ENCODE measurements at regions of chr13 and their contacts with region 1.

Region 1: GRCh38 chr13:97810152-97810551 is 143.3 kb upstream of the IPO5 start:
- DNase-seq: no peak
- ATAC-seq: no peak
- H3K4me3 ChIP-seq: no peak overlapping the region
- H3K27ac ChIP-seq: no peak overlapping the region
- H3K4me1 ChIP-seq: peaks cover 0 to 4% (median 0%) of the 10 kb centered on the region in 9 donors
- H3K27me3 ChIP-seq: no peaks in the 10 kb centered on the region
- CTCF ChIP-seq: peak; percentile 11 to 54 (median 47)

Region 2: DNA sequence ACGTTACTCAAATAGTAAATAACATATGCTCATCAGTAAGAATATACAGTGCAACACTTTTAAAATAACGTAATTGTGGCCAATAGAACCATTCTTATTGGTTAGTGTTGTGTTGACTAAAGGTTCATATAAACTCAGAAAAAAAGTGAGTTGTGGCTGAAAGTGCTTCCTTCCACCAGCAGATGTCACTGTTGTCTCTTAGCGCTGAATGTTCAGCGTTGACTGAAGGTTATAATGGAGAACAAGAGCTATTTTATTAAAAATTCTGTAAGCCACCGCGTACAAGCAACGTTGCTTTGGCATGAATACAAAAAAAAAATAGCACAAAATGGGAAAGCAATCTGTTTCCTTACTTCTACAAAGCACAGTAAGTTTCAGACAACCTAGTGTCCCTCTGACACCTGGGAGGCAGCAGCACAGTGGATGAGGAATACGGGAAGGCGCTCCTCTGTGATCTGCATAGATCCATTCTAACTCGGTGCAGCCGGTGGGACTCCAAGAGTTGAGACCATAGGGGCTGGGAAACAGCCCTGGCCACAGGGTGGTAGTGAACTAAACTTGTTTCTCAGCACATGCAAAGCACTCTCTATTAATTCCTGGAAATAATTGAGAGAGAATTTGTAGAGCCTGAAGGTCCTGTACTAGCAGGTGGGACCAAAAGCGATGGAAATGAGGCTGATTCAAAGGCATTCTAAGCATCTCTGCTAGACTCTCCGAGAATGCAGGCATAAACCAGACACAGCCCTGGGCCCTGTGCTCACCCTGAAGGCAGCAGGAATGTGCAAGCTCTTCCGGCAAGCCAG is 791.9 kb before region 1 on chr13:
- intact Hi-C with region 1: loop called in 7 of 10 experiments (anchors 5 to 10 kb)
- DNase-seq: peak in 1 of 2 donors; percentile 37
- ATAC-seq: peak in 7 of 8 donors; percentile 47 to 70 (median 61)
- H3K4me3 ChIP-seq: no peak overlapping the region
- H3K27ac ChIP-seq: no peak overlapping the region
- H3K4me1 ChIP-seq: peaks cover 0 to 6% (median 0%) of the 10 kb centered on the region in 9 donors
- H3K27me3 ChIP-seq: peaks cover 0 to 46% (median 0%) of the 10 kb centered on the region in 7 donors
- CTCF ChIP-seq: peak; percentile 82 to 94 (median 89)

Region 3: GRCh38 chr13:97026531-97027161 is 783.5 kb before region 1 on chr13:
- intact Hi-C with region 1: loop called in 1 of 10 experiments (anchors 10 kb)
- DNase-seq: no peak
- ATAC-seq: peak in 4 of 8 donors; percentile 28 to 49 (median 37)
- H3K4me3 ChIP-seq: no peak overlapping the region
- H3K27ac ChIP-seq: peak overlapping the region in 3 of 10 donors; percentile 11 to 45 (median 16)
- H3K4me1 ChIP-seq: peaks cover 0 to 25% (median 11%) of the 10 kb centered on the region in 9 donors
- H3K27me3 ChIP-seq: peaks cover 0 to 12% (median 0%) of the 10 kb centered on the region in 7 donors
- CTCF ChIP-seq: no peak

Region 4: GRCh38 chr13:97448503-97449230 is 361.5 kb before region 1 on chr13:
- intact Hi-C with region 1: loop called in 1 of 10 experiments (anchors 10 kb)
- DNase-seq: no peak
- ATAC-seq: no peak
- H3K4me3 ChIP-seq: no peak overlapping the region
- H3K27ac ChIP-seq: no peak overlapping the region
- H3K4me1 ChIP-seq: peaks cover 0 to 3% (median 0%) of the 10 kb centered on the region in 9 donors
- H3K27me3 ChIP-seq: no peaks in the 10 kb centered on the region
- CTCF ChIP-seq: no peak